CD4-positive, alpha-beta T cell (primary cell): ENCODE measurements at regions of chr11 and their contacts with region 1.

Region 1: GRCh38 chr11:118227865-118228785 is 3.3 kb upstream of the JAML start:
- DNase-seq: peak in 4 of 14 experiments; percentile 35 to 79 (median 70)
- ATAC-seq: peak; percentile 13
- H3K4me3 ChIP-seq: no peak overlapping the region
- H3K4me3 Mint-ChIP-seq: peak overlapping the region; percentile 76
- H3K27ac ChIP-seq: peak overlapping the region; percentile 54 to 68
- H3K27ac Mint-ChIP-seq: no peak overlapping the region
- H3K4me1 ChIP-seq: peaks cover 60% of the 10 kb centered on the region
- H3K4me1 Mint-ChIP-seq: peaks cover 33% of the 10 kb centered on the region
- H3K27me3 ChIP-seq: no peaks in the 10 kb centered on the region
- H3K27me3 Mint-ChIP-seq: no peaks in the 10 kb centered on the region
- CTCF ChIP-seq: no peak

Region 2: GRCh38 chr11:118216621-118217481 is 11.3 kb before region 1 on chr11:
- CTCF ChIA-PET with region 1: interaction called, 4 read pairs
- POLR2A ChIA-PET with region 1: interaction called, 23 read pairs
- intact Hi-C with region 1: loop called in 1 of 2 experiments (anchors 1 kb)
- DNase-seq: peak in 11 of 14 experiments; percentile 19 to 80 (median 37)
- ATAC-seq: peak; percentile 75
- H3K4me3 ChIP-seq: peak overlapping the region; percentile 40
- H3K4me3 Mint-ChIP-seq: peak overlapping the region; percentile 84
- H3K27ac ChIP-seq: peak overlapping the region; percentile 10 to 52
- H3K27ac Mint-ChIP-seq: no peak overlapping the region
- H3K4me1 ChIP-seq: peaks cover 89% of the 10 kb centered on the region
- H3K4me1 Mint-ChIP-seq: peaks cover 99% of the 10 kb centered on the region
- H3K27me3 ChIP-seq: no peaks in the 10 kb centered on the region
- H3K27me3 Mint-ChIP-seq: no peaks in the 10 kb centered on the region
- CTCF ChIP-seq: no peak

Region 3: DNA sequence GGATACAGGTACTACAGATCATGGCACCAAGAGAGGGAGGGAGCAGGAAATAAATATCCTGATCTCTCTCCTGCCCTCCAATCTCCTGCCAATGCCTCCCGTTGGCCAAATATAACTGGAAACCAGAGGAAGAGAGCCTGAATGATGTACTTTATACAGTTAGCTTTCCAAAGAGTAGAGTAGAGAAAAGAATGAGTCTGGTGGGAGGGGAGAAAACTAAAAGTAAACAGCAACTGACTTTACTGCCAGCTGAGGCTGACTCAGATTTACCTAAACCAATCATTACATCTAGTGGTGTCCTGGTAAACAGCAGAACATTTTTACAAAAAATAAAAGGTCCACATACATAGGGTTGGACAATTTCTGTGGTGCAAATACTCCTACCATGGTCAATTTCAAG is 18.9 kb after region 1 on chr11:
- CTCF ChIA-PET with region 1: interaction called, 7 read pairs
- POLR2A ChIA-PET with region 1: interaction called, 78 read pairs
- intact Hi-C with region 1: loop called (anchors 1 to 2 kb)
- DNase-seq: peak in 3 of 14 experiments; percentile 21 to 38 (median 33)
- ATAC-seq: peak; percentile 27
- H3K4me3 ChIP-seq: no peak overlapping the region
- H3K4me3 Mint-ChIP-seq: peak overlapping the region; percentile 35
- H3K27ac ChIP-seq: peak overlapping the region in 1 of 2 donors; percentile 18
- H3K27ac Mint-ChIP-seq: peak overlapping the region; percentile 71
- H3K4me1 ChIP-seq: peaks cover 36% of the 10 kb centered on the region
- H3K4me1 Mint-ChIP-seq: peaks cover 77% of the 10 kb centered on the region
- H3K27me3 ChIP-seq: no peaks in the 10 kb centered on the region
- H3K27me3 Mint-ChIP-seq: no peaks in the 10 kb centered on the region
- CTCF ChIP-seq: no peak

Region 4: DNA sequence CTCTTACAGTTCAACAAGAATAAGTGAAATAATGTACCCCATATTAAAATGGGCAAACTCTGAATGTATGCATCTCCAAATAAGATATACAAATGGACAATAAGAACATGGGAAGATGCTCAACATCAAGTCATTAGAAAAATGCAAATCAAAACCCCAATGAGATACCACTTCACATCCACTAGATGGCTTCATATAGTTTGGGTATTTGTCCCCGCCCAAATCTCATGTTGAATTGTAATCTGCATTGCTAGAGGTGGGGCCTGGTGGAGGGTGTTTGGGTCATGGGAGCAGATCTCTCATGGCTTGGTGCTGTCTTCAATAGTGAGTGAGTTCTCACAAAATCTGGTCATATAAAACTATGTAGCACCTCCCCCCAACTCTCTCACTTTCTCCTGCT is 30.3 kb after region 1 on chr11:
- CTCF ChIA-PET with region 1: interaction called, 3 read pairs
- POLR2A ChIA-PET with region 1: interaction called, 7 read pairs
- intact Hi-C with region 1: loop called in 1 of 2 experiments (anchors 5 kb)
- DNase-seq: peak in 2 of 14 experiments; percentile 35 to 38
- ATAC-seq: no peak
- H3K4me3 ChIP-seq: no peak overlapping the region
- H3K4me3 Mint-ChIP-seq: no peak overlapping the region
- H3K27ac ChIP-seq: no peak overlapping the region
- H3K27ac Mint-ChIP-seq: no peak overlapping the region
- H3K4me1 ChIP-seq: peaks cover 8% of the 10 kb centered on the region
- H3K4me1 Mint-ChIP-seq: peaks cover 25% of the 10 kb centered on the region
- H3K27me3 ChIP-seq: no peaks in the 10 kb centered on the region
- H3K27me3 Mint-ChIP-seq: no peaks in the 10 kb centered on the region
- CTCF ChIP-seq: no peak

Region 5: DNA sequence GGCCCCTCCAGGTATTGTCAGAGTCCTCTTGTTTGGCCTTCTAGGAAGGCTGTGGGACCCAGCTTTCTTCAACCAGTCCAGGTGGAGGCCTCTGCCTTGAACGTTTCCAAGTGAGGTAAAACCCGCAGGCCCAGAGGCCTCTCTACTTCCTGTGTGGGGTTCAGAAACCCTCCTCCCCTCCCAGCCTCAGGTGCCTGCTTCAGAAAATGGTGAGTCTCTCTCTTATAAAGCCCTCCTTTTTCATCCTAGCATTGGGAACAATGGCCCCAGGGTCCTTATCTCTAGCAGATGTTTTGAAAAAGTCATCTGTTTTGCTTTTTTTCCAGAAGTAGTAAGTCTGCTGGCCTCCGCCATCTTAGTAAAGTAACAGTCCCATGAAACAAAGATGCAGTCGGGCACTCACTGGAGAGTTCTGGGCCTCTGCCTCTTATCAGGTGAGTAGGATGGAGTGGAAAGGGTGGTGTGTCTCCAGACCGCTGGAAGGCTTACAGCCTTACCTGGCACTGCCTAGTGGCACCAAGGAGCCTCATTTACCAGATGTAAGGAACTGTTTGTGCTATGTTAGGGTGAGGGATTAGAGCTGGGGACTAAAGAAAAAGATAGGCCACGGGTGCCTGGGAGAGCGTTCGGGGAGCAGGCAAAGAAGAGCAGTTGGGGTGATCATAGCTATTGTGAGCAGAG is 76.6 kb after region 1 on chr11 and contains the start of gene CD3E:
- CTCF ChIA-PET with region 1: no interaction called
- POLR2A ChIA-PET with region 1: interaction called, 15 read pairs
- intact Hi-C with region 1: no loop called
- DNase-seq: peak; percentile 51 to 84 (median 64)
- ATAC-seq: peak; percentile 73
- H3K4me3 ChIP-seq: peak within 1 kb of the TSS; percentile 68
- H3K4me3 Mint-ChIP-seq: peak within 1 kb of the TSS; percentile 96
- H3K27ac ChIP-seq: peak within 1 kb of the TSS; percentile 81 to 88
- H3K27ac Mint-ChIP-seq: peak within 1 kb of the TSS; percentile 100
- H3K4me1 ChIP-seq: peaks cover 64% of the 10 kb centered on the region
- H3K4me1 Mint-ChIP-seq: peaks cover 87% of the 10 kb centered on the region
- H3K27me3 ChIP-seq: no peaks in the 10 kb centered on the region
- H3K27me3 Mint-ChIP-seq: no peaks in the 10 kb centered on the region
- CTCF ChIP-seq: no peak
- total RNA-seq, gene CD3E: 483 to 515 TPM